ENCODE measurements at regions of chr3 and their contacts with region 1.

Region 1: GRCh38 chr3:14688525-14688924 is 13.6 kb downstream of the C3orf20 start:
- DNase-seq: peak; percentile 28 to 79 (median 75)
- H3K4me3 ChIP-seq: peak overlapping the region in 1 of 7 experiments; percentile 7
- H3K27ac ChIP-seq: no peak overlapping the region
- H3K4me1 ChIP-seq: peaks cover 21 to 62% (median 50%) of the 10 kb centered on the region in 4 experiments
- H3K27me3 ChIP-seq: no peaks in the 10 kb centered on the region

Region 2: GRCh38 chr3:14548321-14548729 is 140.2 kb before region 1 on chr3:
- CTCF ChIA-PET with region 1: no interaction called
- POLR2A ChIA-PET with region 1: no interaction called
- DNase-seq: peak; percentile 61 to 75 (median 71)
- H3K4me3 ChIP-seq: no peak overlapping the region
- H3K27ac ChIP-seq: no peak overlapping the region
- H3K4me1 ChIP-seq: peaks cover 0 to under 1% (median 0%) of the 10 kb centered on the region in 4 experiments
- H3K27me3 ChIP-seq: peaks cover 3 to 65% (median 16%) of the 10 kb centered on the region in 5 experiments

Region 3: GRCh38 chr3:14672588-14672987 is 15.9 kb before region 1 on chr3:
- CTCF ChIA-PET with region 1: interaction called, 21 read pairs
- POLR2A ChIA-PET with region 1: no interaction called
- DNase-seq: peak in 2 of 3 donors; percentile 17 to 36
- H3K4me3 ChIP-seq: no peak overlapping the region
- H3K27ac ChIP-seq: no peak overlapping the region
- H3K4me1 ChIP-seq: peaks cover 0 to 9% (median 3%) of the 10 kb centered on the region in 4 experiments
- H3K27me3 ChIP-seq: no peaks in the 10 kb centered on the region